Right ventricle myocardium inferior (tissue), 1 donor: ENCODE measurements at regions of chr11 and their contacts with region 1.

Region 1: DNA sequence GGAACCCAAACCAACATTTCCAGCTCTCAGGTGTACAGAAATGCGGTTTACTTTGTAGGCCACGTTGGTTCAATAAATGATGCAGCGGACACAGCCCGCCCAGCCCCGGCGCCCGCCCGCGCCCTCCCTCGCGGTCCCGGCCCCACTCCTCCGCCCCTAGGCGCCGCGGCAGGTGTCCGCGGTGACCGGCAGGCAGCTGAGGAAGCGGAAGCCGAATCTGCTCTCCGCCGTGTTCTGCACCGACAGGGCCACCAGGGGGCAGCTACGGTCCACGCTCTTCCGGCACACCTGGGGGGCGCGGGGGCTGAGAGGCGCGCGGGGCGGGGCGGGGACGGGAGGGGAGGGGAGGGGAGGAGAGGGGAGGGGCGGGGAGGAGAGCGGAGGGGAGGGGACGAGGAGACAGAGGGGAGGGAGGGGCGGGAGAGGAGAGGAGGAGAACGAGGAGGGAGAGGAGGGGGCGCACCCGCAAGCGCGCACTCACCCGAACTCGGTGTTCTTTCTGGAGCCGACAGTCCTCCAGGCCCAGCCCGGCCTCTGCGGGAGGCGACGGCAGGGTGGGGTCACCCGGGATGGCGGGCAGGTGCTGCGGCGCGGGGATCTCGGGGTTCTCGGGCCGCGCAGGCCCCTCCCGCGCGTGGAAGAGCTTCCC is 5.6 kb downstream of the LMNTD2 start:
- DNase-seq: no peak
- ATAC-seq: peak; percentile 64

Region 2: DNA sequence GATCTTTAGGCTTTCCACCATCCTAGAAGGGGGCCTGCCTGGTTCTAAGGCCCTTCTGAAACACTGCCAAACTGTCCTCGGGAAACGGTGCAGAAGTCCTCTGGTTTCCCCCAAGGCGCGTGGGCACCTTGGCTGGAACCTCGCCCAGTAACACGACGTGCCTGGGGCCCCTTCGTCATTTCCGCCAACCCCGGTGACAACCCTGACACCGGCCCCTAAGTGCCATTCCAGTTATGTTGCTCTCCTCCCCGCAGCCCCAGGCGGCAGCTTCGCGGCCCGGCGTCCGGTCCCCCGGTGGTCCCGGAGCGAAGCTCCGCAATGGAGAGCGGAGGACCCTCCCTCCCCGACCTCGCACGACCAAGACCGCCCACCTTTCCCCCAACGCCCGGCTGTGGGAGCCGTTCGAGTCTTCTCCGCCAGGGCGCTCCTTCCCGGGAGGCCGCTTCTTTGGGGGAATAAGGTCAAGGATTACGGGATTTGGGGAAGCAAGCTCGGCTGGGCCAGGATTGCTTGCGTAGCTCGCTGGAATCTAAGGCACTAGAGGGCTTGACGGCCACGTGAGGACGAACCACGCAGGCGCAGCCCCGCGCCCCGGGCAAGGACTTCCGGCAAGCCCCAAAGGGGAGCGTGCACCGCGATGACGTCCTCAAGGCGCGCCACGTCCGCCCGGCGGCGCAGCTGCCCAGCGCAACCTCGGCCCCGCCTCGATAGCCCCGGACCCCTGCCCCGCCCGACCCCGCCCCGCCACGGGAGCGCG is 48.5 kb before region 1 on chr11:
- intact Hi-C with region 1: no loop called
- DNase-seq: peak; percentile 97
- ATAC-seq: peak; percentile 89

Region 3: GRCh38 chr11:629237-629583 is 74.3 kb after region 1 on chr11:
- intact Hi-C with region 1: loop called (anchors 5 kb)
- DNase-seq: peak; percentile 13
- ATAC-seq: peak; percentile 41

Region 4: GRCh38 chr11:655036-655726 is 100.2 kb after region 1 on chr11:
- intact Hi-C with region 1: no loop called
- DNase-seq: no peak
- ATAC-seq: no peak